Left cardiac atrium (tissue), 4 donors: ENCODE measurements at regions of chr14 and their contacts with region 1.

Region 1: DNA sequence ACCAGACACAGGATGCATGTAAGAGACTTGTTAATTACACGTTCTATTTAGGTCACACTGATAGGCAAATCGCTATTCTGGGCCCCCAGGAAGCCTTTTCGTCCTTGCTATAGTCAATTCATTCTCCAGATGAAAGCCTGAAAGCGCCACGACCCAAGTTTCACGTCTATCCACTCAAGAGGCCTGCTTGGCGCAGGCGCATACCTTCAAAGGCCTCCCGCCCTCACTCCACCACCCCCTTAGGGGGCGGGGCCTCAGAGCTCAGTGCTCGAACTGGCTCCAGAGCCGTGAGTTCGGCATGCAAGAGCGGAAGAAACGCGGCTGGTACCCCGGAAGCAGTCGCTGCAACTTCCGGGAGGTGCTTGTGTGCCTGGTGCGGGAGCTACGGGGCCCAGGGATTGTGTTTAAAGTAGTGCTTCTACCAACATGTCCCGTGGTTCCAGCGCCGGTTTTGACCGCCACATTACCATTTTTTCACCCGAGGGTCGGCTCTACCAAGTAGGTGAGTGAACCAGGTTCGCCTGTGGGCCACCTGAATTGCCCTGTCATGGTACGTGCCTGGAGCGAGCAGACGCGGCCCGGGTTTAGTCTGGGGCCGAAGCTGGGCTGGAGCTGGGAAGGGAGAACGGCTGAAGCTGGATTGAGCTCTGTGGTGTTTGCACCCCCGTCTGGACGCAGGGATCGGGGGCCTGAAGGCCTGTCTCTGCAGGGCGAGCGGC is at the start of gene PSMA6:
- DNase-seq: peak; percentile 99
- ATAC-seq: peak; percentile 100
- total RNA-seq, gene PSMA6: 131 to 165 TPM

Region 2: GRCh38 chr14:35341446-35342159 is 49.4 kb after region 1 on chr14:
- intact Hi-C with region 1: loop called in 1 of 2 experiments (anchors 5 kb)
- DNase-seq: peak; percentile 98
- ATAC-seq: peak; percentile 92 to 93

Region 3: GRCh38 chr14:35632676-35633075 is 340.5 kb after region 1 on chr14:
- intact Hi-C with region 1: no loop called
- DNase-seq: no peak
- ATAC-seq: no peak